Heart left ventricle (tissue), 16 donors: ENCODE measurements at regions of chr11 and their contacts with region 1.

Region 1: GRCh38 chr11:13772223-13773046 is 104.0 kb downstream of the FAR1 start:
- DNase-seq: peak in 1 of 5 donors; percentile 18
- ATAC-seq: peak in 2 of 4 donors; percentile 48 to 51
- H3K4me3 ChIP-seq: no peak overlapping the region
- H3K27ac ChIP-seq: no peak overlapping the region
- H3K4me1 ChIP-seq: no peaks in the 10 kb centered on the region
- H3K27me3 ChIP-seq: peaks cover 0 to 45% (median 5%) of the 10 kb centered on the region in 9 donors
- CTCF ChIP-seq: peak; percentile 14 to 60 (median 44)
- POLR2A ChIP-seq: no peak

Region 2: GRCh38 chr11:13368041-13368446 is 404.4 kb before region 1 on chr11:
- intact Hi-C with region 1: no loop called
- DNase-seq: no peak
- ATAC-seq: no peak
- H3K4me3 ChIP-seq: no peak overlapping the region
- H3K27ac ChIP-seq: no peak overlapping the region
- H3K4me1 ChIP-seq: no peaks in the 10 kb centered on the region
- H3K27me3 ChIP-seq: no peaks in the 10 kb centered on the region
- CTCF ChIP-seq: no peak
- POLR2A ChIP-seq: no peak

Region 3: DNA sequence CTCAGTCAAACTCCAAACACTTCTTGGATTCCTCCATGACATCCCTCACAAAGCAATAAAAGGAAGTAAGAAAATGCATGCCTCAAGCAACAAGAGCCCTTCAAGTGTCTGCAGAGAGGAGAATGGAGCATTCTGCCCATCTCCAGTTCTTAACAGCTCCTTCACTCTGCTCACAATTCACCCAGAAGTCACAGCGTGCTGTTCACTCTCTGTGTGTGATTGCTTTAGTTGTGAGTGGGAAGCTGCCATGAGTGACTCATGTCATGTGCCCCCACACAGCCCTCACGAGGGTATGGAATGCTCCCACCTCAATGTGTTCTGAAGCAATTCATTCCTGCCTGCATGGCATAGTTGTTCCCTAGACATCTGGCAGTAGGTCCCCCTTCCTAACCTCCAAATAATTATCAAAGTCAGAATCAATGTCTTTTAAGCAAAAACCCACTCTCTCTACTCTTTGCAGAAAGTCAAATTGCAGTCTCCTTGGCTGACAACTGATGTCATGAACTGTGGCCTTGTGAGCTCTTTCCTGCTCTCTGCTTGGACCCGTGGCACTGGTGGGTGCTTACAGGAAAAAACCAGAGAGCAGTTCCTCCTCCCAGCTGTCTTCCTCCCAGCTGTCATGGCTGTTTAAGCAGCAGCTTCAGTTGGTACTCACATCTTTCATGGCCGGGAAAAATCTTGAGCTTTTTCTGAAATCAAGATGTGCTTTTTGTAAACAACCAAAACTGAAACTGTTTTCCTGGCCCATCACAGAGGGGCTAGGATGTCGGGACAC is 78.0 kb after region 1 on chr11:
- intact Hi-C with region 1: no loop called
- DNase-seq: no peak
- ATAC-seq: no peak
- H3K4me3 ChIP-seq: no peak overlapping the region
- H3K27ac ChIP-seq: no peak overlapping the region
- H3K4me1 ChIP-seq: no peaks in the 10 kb centered on the region
- H3K27me3 ChIP-seq: peaks cover 0 to 5% (median 0%) of the 10 kb centered on the region in 9 donors
- CTCF ChIP-seq: no peak
- POLR2A ChIP-seq: no peak

Region 4: DNA sequence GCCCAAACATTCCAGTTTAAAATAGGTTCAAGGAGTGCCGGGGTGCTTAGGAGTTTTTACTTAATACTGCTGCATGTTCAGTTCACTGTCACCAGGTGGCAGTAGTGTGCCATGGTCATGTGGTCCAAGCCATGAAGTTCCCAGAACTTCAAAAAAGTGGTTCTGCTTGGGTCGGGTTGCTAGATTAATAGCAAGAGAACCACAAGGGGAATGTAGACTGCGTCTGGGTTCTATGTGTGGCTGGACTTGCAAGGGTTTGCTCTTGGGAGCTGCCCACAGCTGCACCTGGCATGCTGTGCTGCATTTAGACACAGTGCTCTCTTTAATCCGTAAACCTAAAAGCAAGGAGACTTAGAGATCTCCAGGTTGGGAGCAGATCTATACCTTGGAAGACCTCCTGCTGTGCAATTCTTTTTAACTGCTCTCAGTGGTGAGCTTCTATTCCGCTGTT is 183.6 kb after region 1 on chr11:
- intact Hi-C with region 1: loop called in 5 of 10 experiments (anchors 5 to 10 kb)
- DNase-seq: peak in 4 of 5 donors; percentile 41 to 57 (median 50)
- ATAC-seq: peak in 3 of 4 donors; percentile 44 to 84 (median 62)
- H3K4me3 ChIP-seq: no peak overlapping the region
- H3K27ac ChIP-seq: no peak overlapping the region
- H3K4me1 ChIP-seq: peaks cover 0 to 5% (median 0%) of the 10 kb centered on the region in 12 donors
- H3K27me3 ChIP-seq: peaks cover 0 to 62% (median 11%) of the 10 kb centered on the region in 9 donors
- CTCF ChIP-seq: peak; percentile 80 to 90 (median 85)
- POLR2A ChIP-seq: no peak

Region 5: GRCh38 chr11:14249121-14249963 is 476.9 kb after region 1 on chr11:
- intact Hi-C with region 1: loop called (anchors 1 to 5 kb)
- DNase-seq: peak in 4 of 5 donors; percentile 37 to 75 (median 53)
- ATAC-seq: peak in 3 of 4 donors; percentile 49 to 64 (median 51)
- H3K4me3 ChIP-seq: no peak overlapping the region
- H3K27ac ChIP-seq: no peak overlapping the region
- H3K4me1 ChIP-seq: peaks cover 0 to 20% (median 2%) of the 10 kb centered on the region in 12 donors
- H3K27me3 ChIP-seq: peaks cover 0 to 43% (median 2%) of the 10 kb centered on the region in 9 donors
- CTCF ChIP-seq: peak; percentile 80 to 93 (median 90)
- POLR2A ChIP-seq: no peak

Region 6: DNA sequence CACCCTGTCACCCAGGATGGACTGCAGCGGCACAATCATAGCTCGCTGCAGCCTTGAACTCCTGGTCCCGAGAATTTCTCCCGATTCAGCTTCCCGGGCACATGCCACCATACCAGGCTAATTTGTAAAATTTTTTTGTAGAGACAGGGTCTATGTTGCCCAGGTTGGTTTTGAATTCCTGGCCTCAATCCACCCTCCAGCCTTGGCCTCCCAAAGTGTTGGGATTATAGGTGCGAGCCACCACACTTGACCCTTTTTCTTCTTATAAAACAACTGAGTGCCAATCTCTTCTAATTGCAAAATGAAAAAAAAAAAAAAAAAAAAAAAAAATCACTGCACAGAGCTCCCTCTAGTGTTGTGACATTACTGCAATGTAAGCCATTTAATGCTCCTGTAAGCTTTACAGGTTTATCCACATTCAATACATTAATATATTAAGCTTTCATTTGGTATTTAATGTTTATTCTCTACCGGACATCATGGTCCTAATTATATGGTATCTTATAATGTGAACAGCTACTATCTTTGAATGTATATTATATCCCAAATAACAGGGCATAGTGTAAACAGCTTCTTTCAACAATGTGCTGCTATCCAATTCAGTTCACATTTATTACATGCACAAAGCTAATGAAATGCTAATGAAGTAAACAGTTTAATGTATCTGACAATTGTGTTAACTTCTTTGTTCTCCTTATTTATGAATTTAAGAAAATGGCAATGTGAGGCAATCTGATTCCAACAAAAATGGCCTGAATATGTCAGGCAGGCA is 682.6 kb after region 1 on chr11:
- intact Hi-C with region 1: loop called in 1 of 10 experiments (anchors 10 kb)
- DNase-seq: no peak
- ATAC-seq: peak in 3 of 4 donors; percentile 44 to 53 (median 45)
- H3K4me3 ChIP-seq: no peak overlapping the region
- H3K27ac ChIP-seq: no peak overlapping the region
- H3K4me1 ChIP-seq: peaks cover 0 to 8% (median 0%) of the 10 kb centered on the region in 12 donors
- H3K27me3 ChIP-seq: no peaks in the 10 kb centered on the region
- CTCF ChIP-seq: peak; percentile 46 to 74 (median 63)
- POLR2A ChIP-seq: no peak